Ascending aorta (tissue), 2 donors: ENCODE measurements at regions of chr15 and their contacts with region 1.

Region 1: DNA sequence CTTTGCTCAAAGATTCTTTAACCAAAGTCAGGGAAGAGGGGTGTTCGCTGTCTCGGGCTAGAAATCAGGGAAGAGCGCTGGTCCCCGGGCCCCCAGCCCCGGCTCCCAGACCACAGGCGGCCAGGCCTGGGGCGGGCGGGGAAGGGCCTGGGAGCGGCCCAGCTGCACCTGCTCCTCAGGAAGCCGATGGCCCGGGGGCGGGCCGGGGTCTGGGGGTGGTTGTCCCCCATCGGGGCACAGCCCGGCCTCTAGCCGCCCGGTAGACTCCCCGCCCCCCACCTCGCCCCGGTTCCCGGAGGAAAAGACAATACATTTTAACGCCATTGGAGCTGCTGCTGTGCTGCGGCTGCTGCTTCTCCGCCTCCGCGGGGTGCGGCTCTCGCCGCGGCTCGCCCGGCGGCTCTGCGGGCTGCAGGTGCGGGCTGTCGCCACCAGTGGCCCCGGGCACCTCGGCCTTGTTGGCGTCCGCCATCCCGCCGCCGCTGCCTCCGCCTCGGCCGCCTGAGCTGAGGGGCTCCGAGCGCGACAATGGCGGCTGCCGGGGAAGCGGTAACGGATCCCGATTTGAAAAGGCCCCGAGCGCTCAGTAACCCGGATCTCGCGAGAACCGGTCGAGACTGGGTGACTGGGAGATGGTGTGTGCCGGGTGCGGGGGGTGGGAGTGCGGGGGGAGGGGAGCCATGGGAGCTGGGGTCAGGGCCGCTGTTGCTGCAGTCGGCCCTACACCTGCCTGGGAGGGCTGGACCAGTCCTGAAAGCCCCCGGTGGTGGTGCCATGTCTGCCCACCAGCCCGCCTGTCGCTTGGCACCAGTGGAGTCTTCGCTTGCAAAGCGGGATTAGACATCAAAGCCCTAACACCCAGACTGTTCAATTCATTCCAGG is at the start of gene MYEF2:
- DNase-seq: peak; percentile 15 to 84
- H3K4me3 ChIP-seq: peak within 1 kb of the TSS; percentile 63 to 80
- H3K27ac ChIP-seq: peak within 1 kb of the TSS; percentile 92 to 96
- H3K4me1 ChIP-seq: peaks cover 0 to 6% of the 10 kb centered on the region in 2 donors
- H3K27me3 ChIP-seq: no peaks in the 10 kb centered on the region
- CTCF ChIP-seq: no peak
- total RNA-seq, gene MYEF2: 13.6 TPM

Region 2: DNA sequence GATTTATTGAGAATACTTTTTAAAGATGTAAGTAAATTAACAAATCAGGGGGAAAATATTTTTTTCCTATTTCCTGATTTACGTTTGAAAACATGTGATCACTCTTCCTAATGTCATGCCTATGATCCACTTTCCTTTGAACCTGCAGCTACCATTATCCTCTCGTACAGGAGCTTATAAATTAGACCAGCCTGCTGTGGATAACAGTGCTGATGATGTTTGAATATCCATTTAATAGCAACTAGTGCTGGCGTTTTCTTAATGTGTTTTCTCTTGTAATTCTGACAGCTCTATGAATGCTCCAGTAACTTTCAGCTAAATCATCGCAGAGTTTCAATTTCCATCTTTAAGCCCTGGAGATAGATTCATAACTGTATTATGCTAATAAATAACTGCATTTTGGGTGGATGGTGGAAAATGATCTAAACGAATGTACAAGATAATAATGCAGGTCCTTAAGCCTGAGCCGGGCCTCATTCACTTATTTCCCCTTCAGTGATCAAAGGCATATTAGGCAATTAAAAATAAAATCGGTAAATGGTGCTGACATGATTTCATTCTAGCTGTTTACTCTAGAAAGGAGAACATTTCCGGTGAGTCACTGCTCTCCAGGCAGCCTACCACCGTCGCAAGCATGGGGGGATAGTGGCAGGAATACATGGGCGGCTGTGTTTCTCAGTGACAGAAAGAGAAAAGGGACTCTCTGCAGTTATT is 115.7 kb before region 1 on chr15:
- intact Hi-C with region 1: loop called (anchors 5 kb)
- DNase-seq: no peak
- H3K4me3 ChIP-seq: no peak overlapping the region
- H3K27ac ChIP-seq: no peak overlapping the region
- H3K4me1 ChIP-seq: peaks cover 4 to 16% of the 10 kb centered on the region in 2 donors
- H3K27me3 ChIP-seq: no peaks in the 10 kb centered on the region
- CTCF ChIP-seq: no peak

Region 3: GRCh38 chr15:48205981-48206380 is 28.0 kb after region 1 on chr15 and contains the start of gene SLC12A1:
- intact Hi-C with region 1: no loop called
- DNase-seq: no peak
- H3K4me3 ChIP-seq: no peak within 1 kb of the TSS
- H3K27ac ChIP-seq: no peak within 1 kb of the TSS
- H3K4me1 ChIP-seq: no peaks in the 10 kb centered on the region
- H3K27me3 ChIP-seq: no peaks in the 10 kb centered on the region
- CTCF ChIP-seq: no peak
- total RNA-seq, gene SLC12A1: not detected